Endothelial cell of umbilical vein (primary cell): ENCODE measurements at regions of chr1 and their contacts with region 1.

Region 1: DNA sequence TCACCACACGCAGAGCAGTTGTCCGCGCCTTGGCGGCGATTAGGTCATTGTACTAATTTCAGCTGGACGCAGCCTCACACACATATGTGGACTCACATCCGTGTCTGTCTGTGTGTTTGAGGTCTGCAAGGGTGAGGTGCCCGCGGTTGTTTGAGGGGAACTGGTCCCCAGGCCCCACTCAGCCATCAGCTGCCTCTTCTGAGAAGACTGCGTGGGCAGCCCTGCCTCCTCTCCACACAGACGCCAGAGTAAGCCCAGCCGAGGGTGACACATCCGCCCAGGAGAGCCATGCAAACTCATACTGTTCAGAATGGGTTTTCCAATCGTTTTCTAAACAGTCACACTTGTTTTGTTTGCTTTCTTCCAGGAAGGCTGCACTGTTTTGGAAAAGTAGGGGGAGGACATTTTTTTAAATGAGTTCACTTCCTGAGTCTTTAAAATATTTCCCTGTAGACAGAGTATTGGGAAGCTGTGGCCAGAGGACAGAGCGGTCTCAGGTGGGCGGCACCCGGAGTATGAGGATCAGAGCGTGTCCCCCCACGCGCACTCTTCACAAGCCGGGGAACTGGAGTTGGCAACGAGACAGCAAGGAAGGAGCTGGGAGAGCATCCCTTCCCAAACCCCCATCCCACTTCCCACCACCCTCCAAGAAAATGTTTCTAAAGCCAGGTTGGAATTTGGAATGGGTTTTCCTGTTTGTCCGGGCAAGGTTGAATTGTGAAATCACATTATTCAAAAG is 53.3 kb downstream of the TOMM20 start:
- DNase-seq: peak; percentile 92
- H3K4me3 ChIP-seq: no peak overlapping the region
- H3K27ac ChIP-seq: peak overlapping the region; percentile 95
- H3K4me1 ChIP-seq: peaks cover 33% of the 10 kb centered on the region
- H3K27me3 ChIP-seq: no peaks in the 10 kb centered on the region
- CTCF ChIP-seq: no peak
- POLR2A ChIP-seq: peak; percentile 58

Region 2: DNA sequence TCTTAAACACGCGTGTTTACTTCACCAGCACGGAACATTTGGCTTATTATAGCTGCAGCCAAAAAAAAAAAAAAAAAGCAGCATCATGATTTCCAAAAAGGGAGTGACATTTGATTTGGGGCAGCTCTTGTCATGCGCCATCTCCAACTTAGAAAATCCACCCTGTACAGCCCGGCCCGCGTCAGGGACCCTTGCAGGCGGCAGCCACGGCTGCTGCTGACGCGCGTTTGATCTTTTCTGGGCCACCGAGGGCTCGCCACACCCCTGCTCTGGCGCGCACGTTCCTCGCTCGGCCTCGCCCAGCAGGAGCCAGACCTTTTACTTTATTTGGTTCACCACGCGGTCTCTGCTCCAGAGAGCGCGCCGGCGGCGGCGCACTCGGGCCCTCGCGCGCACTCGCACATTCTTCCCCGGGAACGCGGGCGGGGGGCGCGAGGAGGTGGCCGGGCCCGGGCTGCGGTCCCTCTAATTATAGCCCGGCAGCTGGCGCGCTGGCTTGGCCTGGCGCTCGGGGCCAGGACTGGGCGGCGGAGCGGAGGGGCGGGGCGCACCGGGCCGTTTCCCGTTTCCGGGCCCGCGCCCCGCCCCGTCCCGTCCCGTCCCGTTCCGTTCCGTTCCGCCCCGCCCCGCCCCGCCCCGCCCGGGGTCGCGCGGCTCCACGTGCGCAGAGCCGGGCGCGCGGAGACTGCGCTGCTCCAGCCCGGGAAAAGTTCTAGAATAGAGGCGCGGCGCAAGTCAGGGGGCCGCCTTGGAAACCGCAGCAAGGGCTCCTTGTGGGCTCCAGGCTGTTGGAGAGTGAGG is 475.5 kb before region 1 on chr1:
- CTCF ChIA-PET with region 1: interaction called, 3 read pairs
- POLR2A ChIA-PET with region 1: no interaction called
- dilution Hi-C with region 1: loop called (anchors 10 kb)
- intact Hi-C with region 1: no loop called
- DNase-seq: peak; percentile 92
- H3K4me3 ChIP-seq: peak overlapping the region; percentile 18 to 53 (median 32)
- H3K27ac ChIP-seq: peak overlapping the region; percentile 87
- H3K4me1 ChIP-seq: peaks cover 50% of the 10 kb centered on the region
- H3K27me3 ChIP-seq: no peaks in the 10 kb centered on the region
- CTCF ChIP-seq: peak in 1 of 2 donors; percentile 3
- POLR2A ChIP-seq: no peak

Region 3: DNA sequence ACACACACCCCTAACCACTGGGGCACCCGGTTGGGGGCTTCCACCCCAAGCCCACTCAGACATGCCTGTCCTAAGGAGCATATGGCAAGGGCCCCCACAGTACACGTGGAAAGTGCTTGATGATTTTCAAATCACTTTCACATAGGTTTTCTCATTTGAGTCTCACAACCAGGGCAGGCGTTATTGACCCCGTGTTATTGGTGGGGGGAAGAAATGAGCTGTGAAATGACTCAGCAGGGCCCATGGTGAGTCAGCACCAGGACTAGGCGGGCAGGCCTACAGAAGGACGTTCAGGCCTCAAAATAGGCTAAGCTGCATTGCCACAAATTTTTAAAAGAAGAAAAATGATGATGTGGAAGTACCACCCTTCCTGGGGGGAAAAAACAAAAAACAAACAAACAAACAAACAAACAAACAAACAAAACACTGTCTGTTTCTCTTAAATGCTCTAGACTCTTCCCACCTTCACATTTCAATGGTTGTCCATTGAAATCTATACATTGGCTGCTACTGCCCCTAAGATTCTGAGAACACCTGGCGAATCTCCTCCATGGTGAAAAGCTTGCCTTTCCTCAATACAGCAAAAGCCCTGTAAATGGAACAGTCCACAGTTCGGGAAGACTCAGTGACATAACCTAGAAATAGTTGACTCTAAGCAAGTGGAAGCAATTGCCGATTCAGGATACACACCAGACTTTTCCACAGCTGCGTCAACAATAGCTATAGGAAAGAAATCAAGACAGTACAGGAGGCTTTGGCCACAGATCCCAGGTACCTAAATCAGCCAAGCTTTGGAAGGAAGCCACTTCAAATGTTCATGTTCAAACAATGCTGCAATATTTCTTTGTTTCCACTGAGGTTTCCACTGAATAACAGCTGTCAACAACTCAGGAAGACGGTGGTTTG is 181.4 kb before region 1 on chr1:
- CTCF ChIA-PET with region 1: no interaction called
- POLR2A ChIA-PET with region 1: no interaction called
- dilution Hi-C with region 1: no loop called
- intact Hi-C with region 1: loop called (anchors 1 kb)
- DNase-seq: peak; percentile 98
- H3K4me3 ChIP-seq: no peak overlapping the region
- H3K27ac ChIP-seq: peak overlapping the region; percentile 93
- H3K4me1 ChIP-seq: peaks cover 20% of the 10 kb centered on the region
- H3K27me3 ChIP-seq: no peaks in the 10 kb centered on the region
- CTCF ChIP-seq: no peak
- POLR2A ChIP-seq: no peak

Region 4: DNA sequence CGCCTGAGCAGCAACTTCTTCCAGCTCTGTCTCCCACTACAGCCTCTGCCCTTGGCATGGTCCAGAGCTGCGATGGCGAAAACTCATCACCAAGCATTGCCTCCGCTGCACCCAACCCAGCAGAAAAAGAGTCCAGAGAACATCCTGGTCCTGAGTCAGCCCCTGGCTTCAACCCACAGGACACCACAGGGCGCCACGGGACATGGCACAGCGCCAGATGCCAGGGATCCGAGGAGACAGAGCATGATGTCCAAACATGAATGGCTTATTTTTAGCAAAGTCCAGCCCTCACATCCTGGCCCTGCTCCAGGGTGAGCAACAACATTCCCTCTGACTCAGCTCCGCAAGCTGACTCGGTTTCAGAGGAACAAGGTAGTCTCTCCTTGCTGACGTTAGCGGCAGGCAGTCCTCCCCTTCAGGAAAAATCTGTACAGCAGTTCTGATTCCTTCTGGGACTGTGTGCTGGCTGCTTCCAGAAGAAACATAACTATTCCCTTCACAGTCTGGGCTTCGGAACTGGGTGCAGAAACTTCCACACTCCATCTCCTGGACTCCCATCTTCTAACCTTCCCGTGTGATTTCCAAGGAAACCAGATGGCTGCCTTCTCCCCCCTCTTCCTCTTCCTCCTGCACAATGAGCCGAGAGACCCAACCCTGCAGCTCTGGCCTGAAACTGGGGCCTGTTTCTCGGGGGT is 78.0 kb before region 1 on chr1:
- CTCF ChIA-PET with region 1: no interaction called
- POLR2A ChIA-PET with region 1: no interaction called
- dilution Hi-C with region 1: no loop called
- intact Hi-C with region 1: loop called (anchors 1 kb)
- DNase-seq: peak; percentile 99
- H3K4me3 ChIP-seq: no peak overlapping the region
- H3K27ac ChIP-seq: peak overlapping the region; percentile 95
- H3K4me1 ChIP-seq: peaks cover 28% of the 10 kb centered on the region
- H3K27me3 ChIP-seq: no peaks in the 10 kb centered on the region
- CTCF ChIP-seq: no peak
- POLR2A ChIP-seq: peak; percentile 58

Region 5: GRCh38 chr1:235050911-235051360 is 24.4 kb before region 1 on chr1:
- CTCF ChIA-PET with region 1: no interaction called
- POLR2A ChIA-PET with region 1: no interaction called
- dilution Hi-C with region 1: no loop called
- intact Hi-C with region 1: loop called (anchors 1 kb)
- DNase-seq: peak; percentile 18
- H3K4me3 ChIP-seq: no peak overlapping the region
- H3K27ac ChIP-seq: no peak overlapping the region
- H3K4me1 ChIP-seq: peaks cover 14% of the 10 kb centered on the region
- H3K27me3 ChIP-seq: no peaks in the 10 kb centered on the region
- CTCF ChIP-seq: no peak
- POLR2A ChIP-seq: no peak

Region 6: GRCh38 chr1:235229868-235230267 is 154.5 kb after region 1 on chr1:
- CTCF ChIA-PET with region 1: no interaction called
- POLR2A ChIA-PET with region 1: no interaction called
- dilution Hi-C with region 1: no loop called
- intact Hi-C with region 1: no loop called
- DNase-seq: no peak
- H3K4me3 ChIP-seq: no peak overlapping the region
- H3K27ac ChIP-seq: no peak overlapping the region
- H3K4me1 ChIP-seq: no peaks in the 10 kb centered on the region
- H3K27me3 ChIP-seq: no peaks in the 10 kb centered on the region
- CTCF ChIP-seq: no peak
- POLR2A ChIP-seq: no peak